ENCODE measurements at regions of chr18 and their contacts with region 1.

Region 1: GRCh38 chr18:66640431-66640830 is 36.5 kb upstream of the CDH19 start:
- DNase-seq: peak in 1 of 2 donors; percentile 35
- ATAC-seq: peak in 1 of 2 donors; percentile 49
- H3K4me3 ChIP-seq: no peak overlapping the region
- H3K27ac ChIP-seq: no peak overlapping the region
- H3K4me1 ChIP-seq: no peaks in the 10 kb centered on the region
- H3K27me3 ChIP-seq: no peaks in the 10 kb centered on the region
- CTCF ChIP-seq: no peak
- POLR2A ChIP-seq: no peak

Region 2: GRCh38 chr18:66548747-66549146 is 91.7 kb before region 1 on chr18:
- in situ Hi-C with region 1: loop called in 1 of 4 experiments (anchors 25 kb)
- intact Hi-C with region 1: no loop called
- DNase-seq: no peak
- ATAC-seq: no peak
- H3K4me3 ChIP-seq: no peak overlapping the region
- H3K27ac ChIP-seq: no peak overlapping the region
- H3K4me1 ChIP-seq: no peaks in the 10 kb centered on the region
- H3K27me3 ChIP-seq: no peaks in the 10 kb centered on the region
- CTCF ChIP-seq: no peak
- POLR2A ChIP-seq: no peak

Region 3: DNA sequence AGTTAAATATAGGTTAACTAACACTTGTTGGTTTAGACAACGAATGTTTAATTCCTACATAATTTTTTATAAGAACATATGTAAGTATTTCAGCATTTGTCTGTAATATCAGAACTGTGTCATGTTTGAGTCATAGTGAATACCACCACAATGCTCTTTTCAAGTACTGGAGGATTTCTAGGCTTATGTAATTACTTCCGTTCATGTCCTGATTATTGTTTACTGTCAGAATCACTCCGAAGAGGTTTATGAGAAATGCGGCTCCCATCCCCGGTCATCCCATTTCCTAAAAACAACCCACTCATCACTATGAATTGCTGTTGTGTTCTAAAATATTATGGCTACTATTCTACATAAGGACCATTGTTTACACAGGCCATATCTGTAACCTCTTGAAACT is 81.7 kb before region 1 on chr18:
- in situ Hi-C with region 1: no loop called
- intact Hi-C with region 1: no loop called
- DNase-seq: no peak
- ATAC-seq: no peak
- H3K4me3 ChIP-seq: no peak overlapping the region
- H3K27ac ChIP-seq: no peak overlapping the region
- H3K4me1 ChIP-seq: no peaks in the 10 kb centered on the region
- H3K27me3 ChIP-seq: no peaks in the 10 kb centered on the region
- CTCF ChIP-seq: no peak
- POLR2A ChIP-seq: no peak

Measured in gastrocnemius medialis (tissue), 4 donors.